ENCODE measurements at regions of chr10 and their contacts with region 1.

Region 1: GRCh38 chr10:102476466-102477141 is 25.3 kb upstream of the C10orf95 start:
- DNase-seq: no peak
- ATAC-seq: no peak
- H3K4me3 ChIP-seq: no peak overlapping the region
- H3K27ac ChIP-seq: no peak overlapping the region
- H3K4me1 ChIP-seq: no peaks in the 10 kb centered on the region
- H3K27me3 ChIP-seq: no peaks in the 10 kb centered on the region
- CTCF ChIP-seq: no peak
- EP300 ChIP-seq: no peak
- POLR2A ChIP-seq: no peak
- RAD21 ChIP-seq: no peak

Region 2: DNA sequence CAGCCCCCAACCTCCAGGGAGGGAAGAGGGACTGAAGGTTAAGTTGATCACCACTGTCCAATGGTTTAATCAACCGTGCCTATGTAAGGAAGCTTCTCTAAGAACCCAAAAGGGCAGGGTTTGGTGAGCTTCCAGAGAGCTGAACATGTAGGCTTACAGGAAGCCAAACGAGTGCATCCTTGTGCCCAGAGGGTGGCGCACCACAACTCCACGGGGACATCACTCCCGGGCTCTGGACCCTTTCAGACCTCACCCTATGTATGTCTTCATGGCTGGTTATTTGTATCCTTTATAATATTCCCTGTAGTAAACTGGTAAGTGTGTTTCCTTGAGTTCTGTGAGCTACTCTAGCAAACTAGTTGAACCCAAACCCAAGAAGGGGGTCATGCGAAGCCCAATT is 92.6 kb before region 1 on chr10:
- CTCF ChIA-PET with region 1: interaction called, 17 read pairs
- POLR2A ChIA-PET with region 1: no interaction called
- RAD21 ChIA-PET with region 1: interaction called, 5 read pairs
- SMC1A ChIA-PET with region 1: interaction called, 5 read pairs
- in situ Hi-C with region 1: no loop called
- intact Hi-C with region 1: no loop called
- DNase-seq: no peak
- ATAC-seq: peak; percentile 59
- H3K4me3 ChIP-seq: no peak overlapping the region
- H3K27ac ChIP-seq: no peak overlapping the region
- H3K4me1 ChIP-seq: peaks cover 13% of the 10 kb centered on the region
- H3K27me3 ChIP-seq: no peaks in the 10 kb centered on the region
- CTCF ChIP-seq: peak in 1 of 3 experiments; percentile 26; a peak in 3 of 6 replicates
- EP300 ChIP-seq: no peak
- POLR2A ChIP-seq: no peak
- RAD21 ChIP-seq: no peak

Region 3: GRCh38 chr10:102399217-102400089 is 77.2 kb before region 1 on chr10:
- CTCF ChIA-PET with region 1: interaction called, 10 read pairs
- POLR2A ChIA-PET with region 1: interaction called, 3 read pairs
- RAD21 ChIA-PET with region 1: interaction called, 21 read pairs
- SMC1A ChIA-PET with region 1: no interaction called
- in situ Hi-C with region 1: no loop called
- intact Hi-C with region 1: loop called (anchors 1 kb)
- DNase-seq: peak; percentile 56
- ATAC-seq: peak; percentile 66
- H3K4me3 ChIP-seq: peak overlapping the region; percentile 67
- H3K27ac ChIP-seq: peak overlapping the region; percentile 37
- H3K4me1 ChIP-seq: peaks cover 20% of the 10 kb centered on the region
- H3K27me3 ChIP-seq: no peaks in the 10 kb centered on the region
- CTCF ChIP-seq: peak; percentile 88 to 94 (median 88)
- EP300 ChIP-seq: no peak
- POLR2A ChIP-seq: peak; percentile 86
- RAD21 ChIP-seq: peak; percentile 61

Region 4: DNA sequence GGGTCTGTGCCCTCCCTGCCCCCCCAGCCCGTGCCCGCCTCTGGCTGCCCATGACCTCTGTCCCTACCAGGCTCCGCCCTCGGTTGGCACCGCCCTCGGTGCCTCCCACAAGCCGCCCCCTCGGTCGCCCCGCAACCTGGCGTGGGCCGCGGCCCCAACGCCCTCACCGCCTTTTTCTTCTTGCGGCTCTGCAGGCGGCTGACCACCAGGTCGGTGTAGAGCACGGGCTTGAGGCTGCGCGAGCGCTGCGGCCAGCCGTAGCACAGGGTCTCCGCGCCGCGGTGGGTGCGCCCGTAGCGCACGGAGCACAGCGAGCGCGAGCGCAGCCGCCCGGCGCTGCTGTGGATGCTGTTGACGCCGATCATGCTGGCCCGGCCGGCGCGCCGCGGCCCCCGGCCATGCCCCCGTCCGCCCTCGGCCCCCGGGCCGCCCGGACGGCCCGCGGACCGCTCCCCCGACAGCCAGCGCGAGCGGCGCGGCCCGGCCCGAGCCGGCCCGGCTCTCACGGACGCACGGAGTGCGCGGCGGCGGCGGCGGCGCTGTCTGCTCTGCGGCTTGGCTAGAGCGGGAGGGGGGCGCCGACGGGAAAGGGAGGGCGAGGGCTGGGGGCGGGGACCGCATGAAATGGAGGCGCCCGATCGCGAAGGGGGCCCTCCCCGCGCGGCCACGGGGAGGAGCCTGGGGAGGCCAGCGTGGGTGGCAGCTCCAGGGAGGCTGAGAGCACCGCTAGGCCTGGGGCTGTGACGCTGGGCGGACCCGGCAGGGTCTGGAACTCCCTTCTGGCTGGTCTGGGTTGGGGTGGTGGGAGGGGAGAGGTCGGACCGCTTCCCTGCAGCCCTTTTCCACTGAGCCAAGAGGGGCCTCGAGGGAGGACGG is 67.6 kb before region 1 on chr10:
- CTCF ChIA-PET with region 1: interaction called, 5 read pairs
- POLR2A ChIA-PET with region 1: interaction called, 3 read pairs
- RAD21 ChIA-PET with region 1: interaction called, 10 read pairs
- SMC1A ChIA-PET with region 1: no interaction called
- in situ Hi-C with region 1: no loop called
- intact Hi-C with region 1: no loop called
- DNase-seq: no peak
- ATAC-seq: 0 out of 3 replicates have a peak, but pooled peaks have one; percentile 8
- H3K4me3 ChIP-seq: peak overlapping the region; percentile 22; the same call in 1 of the 2 replicates
- H3K27ac ChIP-seq: no peak overlapping the region
- H3K4me1 ChIP-seq: peaks cover 9% of the 10 kb centered on the region
- H3K27me3 ChIP-seq: peaks cover 17 to 21% of the 10 kb centered on the region in 2 experiments
- CTCF ChIP-seq: no peak
- EP300 ChIP-seq: no peak
- POLR2A ChIP-seq: peak; percentile 50; the same call in 1 of the 2 replicates
- RAD21 ChIP-seq: no peak

Region 5: DNA sequence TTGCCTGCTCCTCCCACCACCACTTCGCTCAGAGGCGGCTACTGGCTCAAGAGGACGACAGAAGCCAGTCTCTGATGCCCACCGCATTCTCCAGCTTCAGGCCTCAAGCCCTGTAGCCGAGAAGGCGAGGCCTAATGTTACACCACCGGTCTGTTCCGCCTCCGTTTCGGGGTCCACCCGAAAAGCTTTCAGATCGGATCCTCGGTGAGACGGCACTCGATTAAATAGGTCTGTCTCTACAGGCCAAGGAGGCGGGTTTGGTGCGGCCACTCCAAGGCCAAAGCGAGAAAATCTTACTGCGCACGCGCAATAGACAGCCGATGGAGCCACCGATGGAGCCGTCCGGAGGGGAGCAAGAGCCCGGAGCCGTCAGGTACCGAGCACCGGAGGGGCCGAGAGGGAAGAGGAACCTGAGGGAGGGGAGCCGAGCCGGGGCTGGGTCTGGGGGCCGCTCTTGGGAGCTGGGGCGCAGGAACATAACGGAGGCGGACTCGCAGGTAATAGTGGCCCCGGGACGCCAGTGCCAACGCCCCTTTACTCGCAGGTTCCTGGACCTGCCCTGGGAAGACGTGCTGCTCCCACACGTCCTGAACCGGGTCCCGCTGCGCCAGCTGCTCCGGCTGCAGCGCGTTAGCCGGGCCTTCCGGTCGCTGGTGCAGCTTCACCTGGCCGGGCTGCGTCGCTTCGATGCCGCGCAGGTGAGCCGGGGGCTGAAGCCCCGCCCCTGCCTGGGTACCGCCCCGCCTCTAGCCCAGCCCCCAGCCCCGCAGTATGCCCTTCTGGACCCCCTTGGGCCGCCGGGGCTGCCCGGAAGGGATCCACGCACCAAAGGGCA is 55.6 kb before region 1 on chr10 and contains the start of gene FBXL15:
- CTCF ChIA-PET with region 1: interaction called, 10 read pairs
- POLR2A ChIA-PET with region 1: interaction called, 3 read pairs
- RAD21 ChIA-PET with region 1: interaction called, 3 read pairs
- SMC1A ChIA-PET with region 1: interaction called, 4 read pairs
- in situ Hi-C with region 1: no loop called
- intact Hi-C with region 1: no loop called
- DNase-seq: peak; percentile 89
- ATAC-seq: peak; percentile 77
- H3K4me3 ChIP-seq: peak within 1 kb of the TSS; percentile 98
- H3K27ac ChIP-seq: peak within 1 kb of the TSS; percentile 85
- H3K4me1 ChIP-seq: peaks cover 18% of the 10 kb centered on the region
- H3K27me3 ChIP-seq: no peaks in the 10 kb centered on the region; a peak in 1 of 4 replicates
- CTCF ChIP-seq: no peak
- EP300 ChIP-seq: no peak
- POLR2A ChIP-seq: peak; percentile 79
- RAD21 ChIP-seq: no peak
- polyA plus RNA-seq, gene FBXL15: 0.13 to 0.66 TPM

Region 6: GRCh38 chr10:102461187-102462054 is 15.2 kb before region 1 on chr10:
- CTCF ChIA-PET with region 1: interaction called, 19 read pairs
- POLR2A ChIA-PET with region 1: interaction called, 4 read pairs
- RAD21 ChIA-PET with region 1: interaction called, 10 read pairs
- SMC1A ChIA-PET with region 1: interaction called, 4 read pairs
- in situ Hi-C with region 1: no loop called
- intact Hi-C with region 1: no loop called
- DNase-seq: peak; percentile 43
- ATAC-seq: peak; percentile 96
- H3K4me3 ChIP-seq: peak overlapping the region; percentile 73
- H3K27ac ChIP-seq: no peak overlapping the region
- H3K4me1 ChIP-seq: peaks cover 16% of the 10 kb centered on the region
- H3K27me3 ChIP-seq: no peaks in the 10 kb centered on the region
- CTCF ChIP-seq: no peak
- EP300 ChIP-seq: no peak
- POLR2A ChIP-seq: peak; percentile 53
- RAD21 ChIP-seq: no peak

Region 7: DNA sequence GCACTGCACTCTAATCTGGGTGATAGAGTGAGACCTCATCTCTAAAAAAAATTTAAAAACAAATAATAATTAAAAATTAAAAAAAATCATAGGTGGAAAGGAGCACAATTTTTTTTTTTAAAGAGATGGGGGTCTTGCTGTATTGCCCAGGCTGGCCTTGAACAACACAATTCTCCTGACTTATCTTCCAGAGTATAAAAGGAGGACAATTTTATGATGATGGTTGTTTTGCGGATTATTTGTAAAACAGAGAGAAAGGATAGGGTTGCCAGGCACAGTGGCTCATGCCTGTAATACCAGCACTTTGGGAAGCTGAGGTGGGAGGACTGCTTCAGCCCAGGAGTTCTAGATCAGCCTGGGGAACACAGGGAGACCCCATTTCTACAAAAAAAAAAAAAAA is 20.9 kb after region 1 on chr10:
- CTCF ChIA-PET with region 1: interaction called, 13 read pairs
- POLR2A ChIA-PET with region 1: no interaction called
- RAD21 ChIA-PET with region 1: interaction called, 4 read pairs
- SMC1A ChIA-PET with region 1: interaction called, 8 read pairs
- in situ Hi-C with region 1: no loop called
- intact Hi-C with region 1: no loop called
- DNase-seq: no peak
- ATAC-seq: no peak
- H3K4me3 ChIP-seq: no peak overlapping the region
- H3K27ac ChIP-seq: no peak overlapping the region
- H3K4me1 ChIP-seq: no peaks in the 10 kb centered on the region
- H3K27me3 ChIP-seq: no peaks in the 10 kb centered on the region
- CTCF ChIP-seq: no peak
- EP300 ChIP-seq: no peak
- POLR2A ChIP-seq: no peak
- RAD21 ChIP-seq: no peak

Region 8: DNA sequence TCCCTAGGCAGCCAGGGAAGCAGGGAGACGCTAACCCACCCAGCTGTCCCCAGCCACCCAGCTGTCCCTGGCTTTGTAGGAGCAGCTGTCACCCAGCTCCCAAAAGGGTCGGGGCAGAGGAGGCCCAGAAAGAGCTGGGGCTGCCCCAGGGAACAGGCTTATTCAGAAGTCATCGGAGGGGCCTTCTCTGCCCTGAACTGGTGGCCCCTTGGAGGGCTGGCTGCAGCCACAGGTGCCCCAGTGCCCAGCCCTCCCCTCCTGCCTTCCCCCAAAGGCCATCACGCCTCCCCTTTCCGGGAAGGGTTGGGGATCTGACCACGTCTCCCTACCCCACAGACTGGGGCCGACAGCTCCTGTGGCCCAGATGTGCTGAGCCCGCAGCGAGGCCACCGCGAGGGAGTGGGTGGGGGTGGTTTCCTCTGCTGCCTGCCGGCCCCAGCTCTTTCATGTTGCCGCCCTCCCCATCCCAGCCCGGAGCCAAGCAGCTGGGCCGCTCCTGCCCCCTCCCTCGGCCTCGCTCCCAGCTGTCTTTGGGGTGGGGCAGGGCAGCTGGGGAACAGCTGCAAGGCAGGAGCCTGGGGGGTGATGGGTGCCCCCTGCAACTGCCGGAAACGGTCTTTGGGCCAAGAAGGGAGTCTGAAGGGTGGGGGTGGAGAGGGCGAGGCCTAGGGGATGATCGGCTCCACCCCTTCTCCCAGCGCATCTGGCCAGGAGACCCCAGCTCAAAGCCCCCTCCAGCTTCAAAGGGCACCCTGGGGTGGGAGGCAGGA is 184.5 kb after region 1 on chr10:
- CTCF ChIA-PET with region 1: no interaction called
- POLR2A ChIA-PET with region 1: no interaction called
- RAD21 ChIA-PET with region 1: no interaction called
- SMC1A ChIA-PET with region 1: no interaction called
- in situ Hi-C with region 1: no loop called
- intact Hi-C with region 1: no loop called
- DNase-seq: no peak
- ATAC-seq: peak; percentile 94
- H3K4me3 ChIP-seq: peak overlapping the region; percentile 27; the same call in 1 of the 2 replicates
- H3K27ac ChIP-seq: peak overlapping the region; percentile 83
- H3K4me1 ChIP-seq: peaks cover 22% of the 10 kb centered on the region
- H3K27me3 ChIP-seq: no peaks in the 10 kb centered on the region
- CTCF ChIP-seq: no peak
- EP300 ChIP-seq: peak in 1 of 2 experiments; percentile 73; a peak in 2 of 4 replicates
- POLR2A ChIP-seq: peak; percentile 82
- RAD21 ChIP-seq: peak; percentile 14; the same call in 1 of the 2 replicates